Lower lobe of right lung (tissue), 2 donors: ENCODE measurements at regions of chr7 and their contacts with region 1.

Region 1: GRCh38 chr7:10412422-10413019 is 561.2 kb upstream of the PHF14 start:
- DNase-seq: no peak
- ATAC-seq: peak; percentile 51 to 68
- H3K4me3 ChIP-seq: no peak overlapping the region
- H3K27ac ChIP-seq: no peak overlapping the region
- H3K4me1 ChIP-seq: no peaks in the 10 kb centered on the region
- H3K27me3 ChIP-seq: no peaks in the 10 kb centered on the region
- CTCF ChIP-seq: peak; percentile 69

Region 2: GRCh38 chr7:8418629-8419245 is 1993.8 kb before region 1 on chr7:
- intact Hi-C with region 1: loop called (anchors 10 kb)
- DNase-seq: no peak
- ATAC-seq: no peak
- H3K4me3 ChIP-seq: no peak overlapping the region
- H3K27ac ChIP-seq: no peak overlapping the region
- H3K4me1 ChIP-seq: no peaks in the 10 kb centered on the region
- H3K27me3 ChIP-seq: no peaks in the 10 kb centered on the region
- CTCF ChIP-seq: peak; percentile 77